HCT116 (cell line): ENCODE measurements at regions of chr14 and their contacts with region 1.

Region 1: GRCh38 chr14:34081576-34082136 is 130.8 kb upstream of the EGLN3 start:
- DNase-seq: peak; percentile 57
- ATAC-seq: peak; percentile 84
- H3K4me3 ChIP-seq: peak overlapping the region in 1 of 2 experiments; percentile 16; a peak in 2 of 4 replicates
- H3K27ac ChIP-seq: peak overlapping the region; percentile 50
- H3K4me1 ChIP-seq: peaks cover 36 to 52% of the 10 kb centered on the region in 2 experiments
- H3K27me3 ChIP-seq: no peaks in the 10 kb centered on the region
- CTCF ChIP-seq: no peak
- POLR2A ChIP-seq: no peak
- RAD21 ChIP-seq: peak; percentile 1; the same call in 1 of the 2 replicates

Region 2: DNA sequence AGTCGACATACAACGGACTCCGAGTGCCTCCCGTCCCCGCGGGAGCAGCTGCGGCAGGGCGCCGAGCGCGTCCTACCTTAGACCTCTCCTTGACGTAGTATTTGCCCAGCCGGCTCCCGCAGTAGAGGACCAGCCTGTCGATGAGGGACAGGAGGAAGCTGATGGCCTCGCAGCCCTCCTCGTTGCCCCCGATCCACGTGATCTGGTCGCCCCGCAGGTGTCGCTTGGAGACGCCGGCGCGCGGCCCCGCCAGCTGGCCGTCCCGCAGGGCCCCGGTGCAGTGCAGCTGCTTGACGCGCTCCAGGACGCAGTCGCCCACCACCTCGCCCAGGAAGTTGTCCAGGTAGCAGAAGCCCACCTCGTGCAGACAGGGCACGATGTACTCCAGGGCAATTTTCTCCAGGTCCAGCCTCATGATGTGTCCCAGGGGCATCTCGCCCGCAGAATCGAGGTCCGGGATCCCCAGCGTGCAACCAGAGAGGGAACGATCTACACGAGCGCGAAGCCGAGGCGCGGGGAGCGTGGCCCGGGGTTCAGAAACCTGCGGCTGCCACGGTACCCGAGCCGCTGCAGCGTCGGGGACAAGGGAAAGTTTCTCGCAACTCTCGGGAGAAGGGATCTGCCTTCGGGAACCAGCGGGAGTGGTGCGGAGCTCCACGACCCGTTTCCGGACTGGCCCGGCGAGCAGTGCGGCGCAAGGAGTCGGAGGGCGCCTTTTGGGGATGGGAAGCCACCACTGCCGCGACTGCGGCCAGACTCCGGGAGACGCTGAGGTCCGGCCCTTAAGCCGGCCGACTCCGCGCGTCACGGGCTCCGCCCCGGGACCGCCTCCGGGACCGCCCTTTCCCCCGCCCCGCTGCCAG is 131.1 kb before region 1 on chr14 and contains the start of gene EGLN3:
- CTCF ChIA-PET with region 1: no interaction called
- POLR2A ChIA-PET with region 1: no interaction called
- RAD21 ChIA-PET with region 1: no interaction called
- intact Hi-C with region 1: loop called (anchors 5 kb)
- DNase-seq: peak; percentile 68
- ATAC-seq: peak; percentile 100
- H3K4me3 ChIP-seq: peak within 1 kb of the TSS; percentile 64 to 65
- H3K27ac ChIP-seq: peak within 1 kb of the TSS; percentile 62; the same call in 1 of the 2 replicates
- H3K4me1 ChIP-seq: peaks cover 9 to 28% of the 10 kb centered on the region in 2 experiments
- H3K27me3 ChIP-seq: no peaks in the 10 kb centered on the region
- CTCF ChIP-seq: no peak
- POLR2A ChIP-seq: peak; percentile 51
- RAD21 ChIP-seq: no peak; the same call in 1 of the 2 replicates
- total RNA-seq, gene EGLN3: 13.6 TPM

Region 3: DNA sequence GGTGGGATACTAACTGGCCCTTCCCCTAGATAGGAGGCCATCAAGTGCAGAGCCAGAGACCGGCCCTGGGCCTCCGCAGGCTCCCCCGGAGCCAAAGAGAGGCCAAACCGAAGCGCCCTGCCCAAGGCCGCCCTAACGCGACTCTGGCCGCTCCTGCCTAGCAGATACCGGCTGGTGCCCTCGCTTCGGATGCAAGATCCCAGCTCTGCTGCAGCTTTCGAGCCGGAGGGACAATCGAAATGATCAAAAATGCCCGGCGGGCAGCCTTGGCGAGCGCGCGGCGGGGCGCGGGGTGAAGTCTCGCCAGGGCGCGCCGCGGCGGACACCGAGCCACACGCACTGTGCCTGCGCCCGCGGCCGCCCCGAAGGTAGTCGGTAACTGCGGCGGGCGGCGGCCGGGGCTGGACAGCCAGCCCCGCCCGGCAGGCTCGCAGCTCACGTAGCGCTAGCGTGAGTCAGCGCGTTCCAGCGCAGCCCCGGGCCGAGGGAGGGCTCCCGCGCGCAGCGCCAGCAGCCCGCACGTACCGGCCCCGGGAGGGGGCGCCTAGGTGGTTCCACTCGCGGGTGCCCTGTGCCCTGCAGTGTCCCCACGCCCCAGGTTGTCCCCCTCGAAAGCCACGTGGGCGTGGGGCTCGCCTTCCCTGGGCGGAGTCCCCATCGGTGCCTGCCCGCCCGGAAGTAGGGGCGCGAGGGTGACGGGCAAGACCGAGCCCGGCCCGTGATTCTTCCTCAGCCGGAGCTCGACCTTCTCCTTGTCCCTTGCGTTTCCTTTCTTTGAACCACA is 21.6 kb before region 1 on chr14:
- CTCF ChIA-PET with region 1: interaction called, 4 read pairs
- POLR2A ChIA-PET with region 1: interaction called, 11 read pairs
- RAD21 ChIA-PET with region 1: no interaction called
- intact Hi-C with region 1: no loop called
- DNase-seq: no peak
- ATAC-seq: peak; percentile 94
- H3K4me3 ChIP-seq: peak overlapping the region; percentile 42 to 63
- H3K27ac ChIP-seq: peak overlapping the region; percentile 82
- H3K4me1 ChIP-seq: peaks cover 8 to 36% of the 10 kb centered on the region in 2 experiments; a peak in 3 of 4 replicates
- H3K27me3 ChIP-seq: no peaks in the 10 kb centered on the region
- CTCF ChIP-seq: 0 out of 6 replicates have a peak, but pooled peaks of 1 of the 3 experiments have one; percentile 10
- POLR2A ChIP-seq: peak; percentile 63
- RAD21 ChIP-seq: peak; percentile 36

Region 4: GRCh38 chr14:34098045-34098984 is 16.7 kb after region 1 on chr14:
- CTCF ChIA-PET with region 1: interaction called, 12 read pairs
- POLR2A ChIA-PET with region 1: no interaction called
- RAD21 ChIA-PET with region 1: interaction called in 1 of 2 experiments, 4 read pairs
- intact Hi-C with region 1: no loop called
- DNase-seq: peak; percentile 46
- ATAC-seq: peak; percentile 73
- H3K4me3 ChIP-seq: no peak overlapping the region
- H3K27ac ChIP-seq: no peak overlapping the region
- H3K4me1 ChIP-seq: no peaks in the 10 kb centered on the region
- H3K27me3 ChIP-seq: no peaks in the 10 kb centered on the region
- CTCF ChIP-seq: peak; percentile 61 to 91 (median 83)
- POLR2A ChIP-seq: no peak
- RAD21 ChIP-seq: peak; percentile 94

Region 5: DNA sequence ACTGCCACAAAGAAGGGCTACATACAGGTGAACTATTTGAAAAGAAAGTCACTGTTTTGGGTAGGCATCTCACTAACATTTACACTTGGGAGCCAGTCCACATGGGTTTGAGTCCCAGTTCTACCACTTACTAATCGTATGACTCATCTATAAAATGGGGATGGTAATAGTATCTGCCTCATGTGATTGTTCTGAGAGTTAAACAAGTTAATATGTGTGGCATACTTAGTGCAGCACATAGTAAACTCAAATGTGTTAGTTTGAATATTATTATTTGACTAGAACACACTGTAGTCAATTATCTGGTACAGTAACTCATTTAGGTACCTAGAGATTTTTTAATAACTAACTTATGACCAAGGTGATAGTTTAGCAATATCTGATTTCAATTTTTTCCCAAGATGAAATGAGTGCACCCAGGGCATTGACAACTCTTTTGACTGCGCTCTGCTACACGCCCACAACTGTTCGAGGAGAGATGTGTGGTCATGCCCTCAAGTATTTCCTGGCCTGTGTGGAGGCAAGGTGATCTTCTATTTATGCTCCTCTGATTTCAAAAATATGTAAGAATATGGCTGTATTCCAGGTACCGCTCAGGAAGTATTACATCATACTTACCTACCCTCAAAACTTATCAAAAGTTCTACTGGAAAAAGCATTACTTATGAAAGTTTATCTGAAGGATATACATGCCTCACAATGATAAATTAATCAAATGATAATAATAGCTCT is 79.9 kb after region 1 on chr14:
- CTCF ChIA-PET with region 1: no interaction called
- POLR2A ChIA-PET with region 1: no interaction called
- RAD21 ChIA-PET with region 1: no interaction called
- intact Hi-C with region 1: no loop called
- DNase-seq: no peak
- ATAC-seq: no peak
- H3K4me3 ChIP-seq: no peak overlapping the region
- H3K27ac ChIP-seq: no peak overlapping the region
- H3K4me1 ChIP-seq: no peaks in the 10 kb centered on the region
- H3K27me3 ChIP-seq: peaks cover 24% of the 10 kb centered on the region
- CTCF ChIP-seq: no peak
- POLR2A ChIP-seq: no peak
- RAD21 ChIP-seq: no peak